MCF 10A (cell line): ENCODE measurements at regions of chr5 and their contacts with region 1.

Region 1: GRCh38 chr5:139787568-139788293 is 7.9 kb upstream of the PSD2 start:
- DNase-seq: peak; percentile 86
- H3K4me3 Mint-ChIP-seq: peak overlapping the region; percentile 78
- H3K27ac Mint-ChIP-seq: peak overlapping the region; percentile 47
- H3K4me1 Mint-ChIP-seq: no peaks in the 10 kb centered on the region
- H3K27me3 Mint-ChIP-seq: peaks cover 38% of the 10 kb centered on the region
- CTCF ChIP-seq: peak; percentile 100

Region 2: GRCh38 chr5:139765409-139766217 is 22.1 kb before region 1 on chr5:
- CTCF ChIA-PET with region 1: interaction called, 24 read pairs
- POLR2A ChIA-PET with region 1: no interaction called
- intact Hi-C with region 1: no loop called
- DNase-seq: peak; percentile 85
- H3K4me3 Mint-ChIP-seq: peak overlapping the region; percentile 54
- H3K27ac Mint-ChIP-seq: no peak overlapping the region
- H3K4me1 Mint-ChIP-seq: peaks cover 13% of the 10 kb centered on the region
- H3K27me3 Mint-ChIP-seq: no peaks in the 10 kb centered on the region
- CTCF ChIP-seq: peak; percentile 98

Region 3: DNA sequence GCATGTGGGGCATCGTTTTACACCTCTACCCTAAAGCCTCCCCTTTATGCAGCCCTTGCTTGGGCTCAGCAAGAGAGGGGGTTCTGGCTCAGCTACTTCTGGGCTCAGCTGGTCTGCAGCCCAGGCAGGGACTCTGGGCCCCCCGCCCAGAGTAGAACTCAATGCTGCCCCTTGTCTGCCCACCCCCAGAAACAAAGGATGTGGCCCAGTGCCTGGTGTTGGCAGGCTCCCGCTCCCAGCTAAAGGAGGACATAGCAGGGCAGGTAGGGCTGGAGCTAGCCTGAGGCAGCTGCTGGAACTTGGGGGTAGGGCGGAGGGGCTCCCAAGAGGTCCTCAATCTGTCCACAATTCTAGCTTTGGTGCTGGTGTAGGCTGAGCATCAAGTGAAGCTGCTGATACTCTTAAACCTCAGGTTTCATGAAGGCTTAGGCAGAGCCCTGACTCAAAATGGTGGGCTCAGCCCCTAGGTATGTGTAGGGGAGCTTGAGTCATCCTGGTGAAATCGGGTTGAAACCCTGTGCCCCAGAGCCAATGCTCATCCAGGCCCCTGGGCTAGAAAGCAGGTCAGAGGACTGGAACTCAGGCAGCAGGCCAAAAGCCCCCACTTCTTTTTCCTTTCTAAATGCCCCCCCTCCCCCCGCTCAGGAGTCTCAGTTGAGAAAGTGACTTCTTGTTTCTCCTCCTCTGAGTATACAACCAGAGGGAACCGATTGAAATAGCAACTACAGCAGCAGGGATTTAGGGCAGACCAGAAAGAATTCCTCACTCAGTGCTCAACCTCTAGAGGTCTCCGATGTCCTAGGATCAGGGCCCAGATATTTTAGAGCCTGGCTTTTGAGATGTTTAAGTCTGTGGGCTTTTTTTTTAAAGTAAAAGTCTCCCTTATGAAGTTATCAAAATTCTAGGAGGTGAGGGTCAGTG is 19.3 kb after region 1 on chr5:
- CTCF ChIA-PET with region 1: interaction called, 14 read pairs
- POLR2A ChIA-PET with region 1: interaction called, 3 read pairs
- intact Hi-C with region 1: no loop called
- DNase-seq: no peak
- H3K4me3 Mint-ChIP-seq: no peak overlapping the region
- H3K27ac Mint-ChIP-seq: no peak overlapping the region
- H3K4me1 Mint-ChIP-seq: no peaks in the 10 kb centered on the region
- H3K27me3 Mint-ChIP-seq: peaks cover 46% of the 10 kb centered on the region
- CTCF ChIP-seq: no peak

Region 4: GRCh38 chr5:139844472-139845145 is 56.9 kb after region 1 on chr5:
- CTCF ChIA-PET with region 1: interaction called, 87 read pairs
- POLR2A ChIA-PET with region 1: interaction called, 8 read pairs
- intact Hi-C with region 1: loop called (anchors 1 kb)
- DNase-seq: peak; percentile 82
- H3K4me3 Mint-ChIP-seq: no peak overlapping the region
- H3K27ac Mint-ChIP-seq: no peak overlapping the region
- H3K4me1 Mint-ChIP-seq: peaks cover 3% of the 10 kb centered on the region
- H3K27me3 Mint-ChIP-seq: peaks cover 37% of the 10 kb centered on the region
- CTCF ChIP-seq: peak; percentile 74

Region 5: GRCh38 chr5:139863855-139864558 is 76.3 kb after region 1 on chr5:
- CTCF ChIA-PET with region 1: interaction called, 292 read pairs
- POLR2A ChIA-PET with region 1: interaction called, 18 read pairs
- intact Hi-C with region 1: loop called (anchors 1 kb)
- DNase-seq: peak; percentile 73
- H3K4me3 Mint-ChIP-seq: no peak overlapping the region
- H3K27ac Mint-ChIP-seq: no peak overlapping the region
- H3K4me1 Mint-ChIP-seq: no peaks in the 10 kb centered on the region
- H3K27me3 Mint-ChIP-seq: peaks cover 22% of the 10 kb centered on the region
- CTCF ChIP-seq: peak; percentile 93

Region 6: GRCh38 chr5:139912804-139913203 is 125.1 kb after region 1 on chr5:
- CTCF ChIA-PET with region 1: interaction called, 13 read pairs
- POLR2A ChIA-PET with region 1: no interaction called
- intact Hi-C with region 1: no loop called
- DNase-seq: no peak
- H3K4me3 Mint-ChIP-seq: no peak overlapping the region
- H3K27ac Mint-ChIP-seq: no peak overlapping the region
- H3K4me1 Mint-ChIP-seq: peaks cover 6% of the 10 kb centered on the region
- H3K27me3 Mint-ChIP-seq: no peaks in the 10 kb centered on the region
- CTCF ChIP-seq: no peak

Region 7: GRCh38 chr5:140151730-140152597 is 364.2 kb after region 1 on chr5:
- CTCF ChIA-PET with region 1: interaction called, 12 read pairs
- POLR2A ChIA-PET with region 1: interaction called, 3 read pairs
- intact Hi-C with region 1: loop called (anchors 1 kb)
- DNase-seq: no peak
- H3K4me3 Mint-ChIP-seq: no peak overlapping the region
- H3K27ac Mint-ChIP-seq: no peak overlapping the region
- H3K4me1 Mint-ChIP-seq: peaks cover 4% of the 10 kb centered on the region
- H3K27me3 Mint-ChIP-seq: no peaks in the 10 kb centered on the region
- CTCF ChIP-seq: no peak